ENCODE measurements at regions of chr2 and their contacts with region 1.

Region 1: GRCh38 chr2:217785544-217786045 is 217.2 kb downstream of the TNS1 start:
- DNase-seq: peak; percentile 53 to 96
- H3K4me3 ChIP-seq: no peak overlapping the region
- H3K27ac ChIP-seq: no peak overlapping the region
- H3K4me1 ChIP-seq: peaks cover 0 to 2% (median 0%) of the 10 kb centered on the region in 4 experiments; a peak in 1 of 7 replicates
- H3K27me3 ChIP-seq: no peaks in the 10 kb centered on the region; a peak in 1 of 7 replicates
- CTCF ChIP-seq: peak; percentile 93 to 98 (median 96)
- EP300 ChIP-seq: no peak
- POLR2A ChIP-seq: no peak
- RAD21 ChIP-seq: peak; percentile 98 to 100

Region 2: GRCh38 chr2:217756375-217757107 is 29.1 kb before region 1 on chr2:
- CTCF ChIA-PET with region 1: interaction called, 10 read pairs
- POLR2A ChIA-PET with region 1: no interaction called
- DNase-seq: peak; percentile 79 to 98
- H3K4me3 ChIP-seq: peak overlapping the region in 1 of 4 experiments; percentile 29; a peak in 1 of 8 replicates
- H3K27ac ChIP-seq: no peak overlapping the region
- H3K4me1 ChIP-seq: no peaks in the 10 kb centered on the region
- H3K27me3 ChIP-seq: peaks cover 0 to 3% (median 0%) of the 10 kb centered on the region in 4 experiments; a peak in 1 of 7 replicates
- CTCF ChIP-seq: peak; percentile 79 to 92 (median 84)
- EP300 ChIP-seq: peak in 1 of 2 experiments; percentile 23; a peak in 1 of 3 replicates
- POLR2A ChIP-seq: no peak
- RAD21 ChIP-seq: peak; percentile 92 to 96

Region 3: DNA sequence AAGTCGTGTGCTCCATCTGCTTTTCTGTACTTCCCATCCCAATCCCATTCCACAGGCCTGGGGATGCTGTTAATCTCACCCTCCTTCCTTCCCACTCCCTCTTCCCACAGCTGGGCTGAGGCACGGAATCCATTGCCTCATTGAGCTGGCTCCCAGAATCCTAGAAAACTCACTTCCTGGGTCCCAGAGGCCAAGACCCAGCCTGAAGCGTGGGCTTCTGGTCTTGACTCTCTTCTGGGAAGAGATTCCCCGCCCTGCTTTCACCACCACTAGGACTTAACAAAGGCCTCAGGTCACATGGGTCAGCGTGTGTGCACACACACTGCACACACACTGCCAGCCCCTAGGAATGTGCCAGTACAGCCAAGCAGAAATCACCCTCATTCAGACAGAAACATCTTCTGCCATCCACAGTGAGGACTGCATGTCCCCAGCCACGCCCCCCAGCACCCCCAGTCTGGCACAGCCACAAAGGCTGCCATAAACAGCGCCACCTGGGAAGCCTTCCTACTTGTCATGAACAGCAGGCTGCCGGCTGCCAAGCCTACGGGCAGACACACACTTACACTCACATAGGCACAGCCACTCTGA is 51.4 kb after region 1 on chr2:
- CTCF ChIA-PET with region 1: interaction called, 155 read pairs
- POLR2A ChIA-PET with region 1: no interaction called
- DNase-seq: peak in 1 of 2 experiments; percentile 78
- H3K4me3 ChIP-seq: no peak overlapping the region
- H3K27ac ChIP-seq: 0 out of 2 replicates have a peak overlapping the region, but pooled peaks have one; percentile 5
- H3K4me1 ChIP-seq: peaks cover 0 to 9% (median 6%) of the 10 kb centered on the region in 4 experiments; a peak in 5 of 7 replicates
- H3K27me3 ChIP-seq: no peaks in the 10 kb centered on the region
- CTCF ChIP-seq: peak; percentile 33 to 52 (median 36)
- EP300 ChIP-seq: no peak
- POLR2A ChIP-seq: no peak
- RAD21 ChIP-seq: peak in 1 of 2 experiments; percentile 19; a peak in 1 of 4 replicates

Region 4: GRCh38 chr2:217886720-217887309 is 101.2 kb after region 1 on chr2:
- CTCF ChIA-PET with region 1: interaction called, 759 read pairs
- POLR2A ChIA-PET with region 1: interaction called, 5 read pairs
- DNase-seq: peak; percentile 47 to 92
- H3K4me3 ChIP-seq: no peak overlapping the region
- H3K27ac ChIP-seq: no peak overlapping the region
- H3K4me1 ChIP-seq: no peaks in the 10 kb centered on the region
- H3K27me3 ChIP-seq: no peaks in the 10 kb centered on the region
- CTCF ChIP-seq: peak; percentile 88 to 95 (median 94)
- EP300 ChIP-seq: no peak
- POLR2A ChIP-seq: no peak
- RAD21 ChIP-seq: peak; percentile 90

Region 5: GRCh38 chr2:217943446-217944389 is 158.1 kb after region 1 on chr2:
- CTCF ChIA-PET with region 1: interaction called, 15 read pairs
- POLR2A ChIA-PET with region 1: no interaction called
- DNase-seq: peak in 1 of 2 experiments; percentile 83
- H3K4me3 ChIP-seq: 0 out of 8 replicates have a peak overlapping the region, but pooled peaks of 1 of the 4 experiments have one; percentile 10
- H3K27ac ChIP-seq: no peak overlapping the region
- H3K4me1 ChIP-seq: peaks cover 3 to 16% (median 9%) of the 10 kb centered on the region in 4 experiments
- H3K27me3 ChIP-seq: no peaks in the 10 kb centered on the region
- CTCF ChIP-seq: peak; percentile 27 to 43 (median 34); a peak in 3 of 4 replicates
- EP300 ChIP-seq: no peak
- POLR2A ChIP-seq: peak in 1 of 2 experiments; percentile 26; a peak in 1 of 3 replicates
- RAD21 ChIP-seq: peak; percentile 43 to 61; a peak in 3 of 4 replicates

Region 6: GRCh38 chr2:218003981-218004419 is 218.4 kb after region 1 on chr2:
- CTCF ChIA-PET with region 1: interaction called, 18 read pairs
- POLR2A ChIA-PET with region 1: no interaction called
- DNase-seq: no peak
- H3K4me3 ChIP-seq: no peak overlapping the region
- H3K27ac ChIP-seq: no peak overlapping the region
- H3K4me1 ChIP-seq: peaks cover 0 to 24% (median 15%) of the 10 kb centered on the region in 4 experiments; a peak in 6 of 7 replicates
- H3K27me3 ChIP-seq: peaks cover 0 to 11% (median 9%) of the 10 kb centered on the region in 4 experiments; a peak in 6 of 7 replicates
- CTCF ChIP-seq: no peak
- EP300 ChIP-seq: no peak
- POLR2A ChIP-seq: no peak
- RAD21 ChIP-seq: no peak

Region 7: GRCh38 chr2:218074031-218074430 is 288.4 kb after region 1 on chr2:
- CTCF ChIA-PET with region 1: interaction called, 18 read pairs
- POLR2A ChIA-PET with region 1: no interaction called
- DNase-seq: peak; percentile 27 to 86
- H3K4me3 ChIP-seq: no peak overlapping the region
- H3K27ac ChIP-seq: no peak overlapping the region
- H3K4me1 ChIP-seq: peaks cover 0 to 7% (median under 1%) of the 10 kb centered on the region in 4 experiments; a peak in 3 of 7 replicates
- H3K27me3 ChIP-seq: no peaks in the 10 kb centered on the region; a peak in 1 of 7 replicates
- CTCF ChIP-seq: peak; percentile 67 to 79 (median 73)
- EP300 ChIP-seq: no peak
- POLR2A ChIP-seq: no peak
- RAD21 ChIP-seq: peak; percentile 46 to 62